ENCODE measurements at regions of chr17 and their contacts with region 1.

Region 1: GRCh38 chr17:77280980-77281903 is 140.5 kb downstream of the SEC14L1 start:
- DNase-seq: peak; percentile 87
- H3K4me3 Mint-ChIP-seq: peak overlapping the region; percentile 76
- H3K27ac Mint-ChIP-seq: peak overlapping the region; percentile 92
- H3K4me1 Mint-ChIP-seq: peaks cover 35% of the 10 kb centered on the region
- H3K27me3 Mint-ChIP-seq: no peaks in the 10 kb centered on the region
- CTCF ChIP-seq: peak; percentile 44

Region 2: DNA sequence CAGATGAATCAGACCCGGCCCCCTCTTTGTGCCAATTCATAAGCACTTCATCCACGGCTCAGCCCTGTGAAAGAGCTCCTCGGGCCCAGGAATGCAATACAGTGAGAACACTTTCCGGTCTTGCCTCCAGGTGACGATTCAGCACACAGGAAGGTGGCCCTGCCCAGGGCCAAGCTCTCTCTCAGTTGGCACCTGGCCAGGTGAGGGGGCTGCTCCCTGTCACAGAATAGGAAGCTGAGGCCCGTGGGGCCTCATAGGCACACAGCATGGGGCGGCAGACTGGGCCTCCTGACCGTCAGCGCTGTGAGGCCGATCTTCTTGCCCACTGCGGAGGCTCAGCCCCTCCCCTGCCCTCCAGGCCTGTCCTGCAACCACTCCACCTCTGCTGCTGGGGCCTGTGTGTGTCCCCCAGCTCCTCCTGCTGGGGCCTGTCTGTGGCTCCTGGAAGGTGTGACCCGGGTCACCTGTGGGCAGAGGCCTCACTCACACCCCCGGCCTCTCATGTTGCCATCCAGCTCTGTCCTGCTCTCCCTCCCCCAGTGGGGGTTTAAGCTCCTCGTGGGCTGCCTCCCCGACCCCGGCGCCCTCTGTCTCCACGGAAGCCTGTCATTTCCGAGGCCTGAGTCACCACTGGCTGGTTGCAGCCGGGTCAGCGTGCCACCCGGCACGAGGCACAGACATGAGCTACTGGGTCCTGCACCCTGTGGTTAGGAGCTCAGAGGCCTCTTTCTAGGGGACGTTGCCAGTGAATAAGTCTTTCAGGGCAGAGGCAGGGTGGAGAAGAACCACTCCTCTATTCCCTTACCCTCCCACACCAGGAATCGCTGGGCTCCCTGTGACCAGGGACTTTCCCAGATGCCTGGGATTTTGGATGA is 26.1 kb before region 1 on chr17:
- CTCF ChIA-PET with region 1: interaction called, 29 read pairs
- intact Hi-C with region 1: loop called (anchors 2 kb)
- DNase-seq: peak; percentile 96
- H3K4me3 Mint-ChIP-seq: peak overlapping the region; percentile 57
- H3K27ac Mint-ChIP-seq: peak overlapping the region; percentile 97
- H3K4me1 Mint-ChIP-seq: peaks cover 41% of the 10 kb centered on the region
- H3K27me3 Mint-ChIP-seq: no peaks in the 10 kb centered on the region
- CTCF ChIP-seq: no peak

Region 3: DNA sequence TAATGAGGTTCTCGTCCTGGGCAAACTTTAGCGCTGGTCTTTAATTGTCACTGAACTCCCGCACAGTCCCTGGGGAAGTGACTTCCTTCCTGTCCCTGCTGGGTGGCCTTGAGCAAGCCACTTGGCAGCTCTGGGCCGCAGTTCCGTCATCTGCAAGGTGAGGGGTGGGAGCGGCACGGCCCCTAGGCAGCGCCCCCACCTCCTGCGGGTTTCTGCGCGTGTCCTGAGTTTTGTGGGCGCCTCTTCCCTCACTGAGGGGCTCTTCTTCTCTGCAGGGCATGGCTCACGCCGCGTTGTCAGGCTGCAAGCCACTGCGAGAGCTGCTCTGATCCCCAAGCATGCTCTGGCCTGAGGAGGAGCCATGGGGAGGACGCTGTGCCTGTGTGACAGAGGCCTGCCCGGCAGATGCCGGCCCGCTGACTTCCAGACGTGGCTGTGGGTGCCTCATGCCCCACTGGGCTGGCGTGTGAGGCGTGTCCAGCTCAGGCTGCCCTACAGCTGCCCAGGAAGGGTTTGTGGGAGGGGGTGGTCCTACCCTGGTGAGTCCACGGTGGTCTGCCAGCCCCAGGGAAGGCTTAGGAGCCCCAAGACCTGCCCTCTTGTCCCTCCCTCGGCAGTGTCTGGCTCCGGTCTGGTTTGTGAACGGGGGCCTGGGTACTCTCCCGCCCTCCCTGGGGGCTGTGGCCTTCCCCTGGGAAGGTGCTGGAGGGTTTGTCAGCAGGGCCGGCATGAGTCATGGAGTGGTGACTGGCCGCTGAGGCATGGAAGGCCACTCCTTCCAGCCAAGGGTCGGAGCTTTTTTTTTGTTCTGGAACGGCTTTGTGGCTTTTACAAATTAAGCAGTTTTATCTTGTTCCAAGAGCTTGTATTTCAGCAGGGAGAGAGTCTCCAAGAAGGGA is 41.5 kb after region 1 on chr17:
- CTCF ChIA-PET with region 1: interaction called, 9 read pairs
- intact Hi-C with region 1: loop called (anchors 2 kb)
- DNase-seq: peak; percentile 90
- H3K4me3 Mint-ChIP-seq: peak overlapping the region; percentile 76
- H3K27ac Mint-ChIP-seq: peak overlapping the region; percentile 98
- H3K4me1 Mint-ChIP-seq: peaks cover 79% of the 10 kb centered on the region
- H3K27me3 Mint-ChIP-seq: no peaks in the 10 kb centered on the region
- CTCF ChIP-seq: no peak

Region 4: DNA sequence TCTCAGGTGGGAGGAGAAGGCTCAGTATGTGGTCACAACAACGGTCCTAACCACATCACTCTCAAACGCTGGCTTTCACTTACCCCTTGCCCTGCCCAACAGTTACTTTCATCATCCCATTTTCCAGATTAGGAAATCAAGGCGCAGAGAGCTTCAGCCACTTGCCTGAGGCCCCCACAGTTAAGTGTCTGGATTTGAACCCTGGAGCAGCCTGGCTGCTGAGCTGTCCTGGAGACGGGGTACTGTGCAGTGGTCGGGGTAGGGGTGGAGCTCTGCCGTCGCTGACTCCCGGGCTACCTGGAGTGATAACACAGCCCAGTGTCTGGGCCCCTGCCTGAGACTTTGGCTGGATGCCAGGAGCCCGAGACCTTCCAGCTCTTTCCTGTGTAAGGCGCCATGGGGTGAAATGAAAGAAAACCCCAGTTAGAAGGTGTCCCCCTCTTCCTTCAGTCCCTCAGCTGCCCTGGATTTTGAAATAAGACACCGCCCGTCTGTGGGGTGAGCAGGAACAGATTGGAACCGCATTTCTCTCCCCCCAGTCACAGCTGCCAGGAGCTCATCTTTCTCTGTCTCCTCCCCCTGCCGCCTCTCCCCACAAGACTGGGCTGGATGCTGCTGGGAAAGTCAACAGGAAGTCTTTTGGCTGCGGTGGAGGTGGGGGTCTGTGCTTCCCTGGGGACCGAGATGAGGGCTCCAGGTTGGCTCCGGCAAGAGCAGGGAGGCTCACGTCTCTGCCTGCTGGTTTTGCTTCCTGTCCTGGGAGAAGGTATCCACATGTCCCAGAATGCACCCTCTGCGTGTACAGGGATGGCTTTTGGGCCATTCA is 139.8 kb after region 1 on chr17:
- CTCF ChIA-PET with region 1: no interaction called
- intact Hi-C with region 1: no loop called
- DNase-seq: no peak
- H3K4me3 Mint-ChIP-seq: no peak overlapping the region
- H3K27ac Mint-ChIP-seq: no peak overlapping the region
- H3K4me1 Mint-ChIP-seq: no peaks in the 10 kb centered on the region
- H3K27me3 Mint-ChIP-seq: no peaks in the 10 kb centered on the region
- CTCF ChIP-seq: no peak

Measured in Calu3 (cell line).